Panc1 (cell line): ENCODE measurements at regions of chr14 and their contacts with region 1.

Region 1: DNA sequence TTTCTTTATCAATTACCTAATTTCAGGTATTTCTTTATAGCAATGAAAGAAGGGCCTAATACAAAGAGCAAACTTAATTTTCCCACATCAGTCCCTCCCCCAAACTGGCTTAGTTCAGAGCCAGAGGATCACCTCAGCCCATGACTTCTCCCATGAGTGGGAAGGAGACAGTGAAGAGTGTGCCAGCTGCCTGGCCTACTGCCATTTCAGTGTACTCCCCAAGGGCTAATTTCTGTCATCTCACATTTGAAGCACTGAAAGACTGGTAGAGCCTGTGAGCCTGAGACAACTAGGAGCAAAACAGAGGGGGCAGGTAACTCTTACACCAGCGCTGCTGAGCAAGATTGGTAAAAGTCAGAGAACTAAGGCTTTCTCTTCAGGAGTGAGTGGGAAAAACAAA is 29.1 kb upstream of the ADAM20 start:
- DNase-seq: no peak
- ATAC-seq: no peak
- H3K4me3 ChIP-seq: no peak overlapping the region
- H3K27ac ChIP-seq: no peak overlapping the region
- H3K4me1 ChIP-seq: no peaks in the 10 kb centered on the region
- H3K27me3 ChIP-seq: no peaks in the 10 kb centered on the region
- CTCF ChIP-seq: no peak

Region 2: DNA sequence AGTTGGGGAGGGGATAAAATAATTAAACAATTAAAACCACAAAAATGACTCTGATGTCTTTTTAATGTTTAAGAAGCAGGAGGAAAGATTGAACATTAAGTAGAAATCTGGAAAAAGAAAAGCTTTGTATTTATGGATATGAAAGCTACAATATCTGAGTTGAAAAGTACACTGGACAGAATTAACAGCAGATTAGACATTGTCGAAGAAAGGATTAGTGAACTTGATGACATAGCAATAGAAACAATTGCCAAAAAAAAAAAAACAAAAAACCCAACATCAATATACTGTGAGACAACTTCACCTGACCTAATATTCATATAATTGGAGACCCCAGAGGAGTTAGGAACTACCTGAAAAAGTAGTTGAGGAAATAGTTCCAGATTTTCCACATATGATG is 1078.8 kb after region 1 on chr14:
- CTCF ChIA-PET with region 1: no interaction called
- POLR2A ChIA-PET with region 1: interaction called, 17 read pairs
- in situ Hi-C with region 1: no loop called
- intact Hi-C with region 1: no loop called
- DNase-seq: no peak
- ATAC-seq: no peak
- H3K4me3 ChIP-seq: no peak overlapping the region
- H3K27ac ChIP-seq: no peak overlapping the region
- H3K4me1 ChIP-seq: no peaks in the 10 kb centered on the region
- H3K27me3 ChIP-seq: no peaks in the 10 kb centered on the region
- CTCF ChIP-seq: no peak